ENCODE measurements at regions of chr10 and their contacts with region 1.

Region 1: GRCh38 chr10:931416-932318 is at the start of gene LARP4B:
- DNase-seq: peak; percentile 93 to 99 (median 96)
- ATAC-seq: peak; percentile 98
- H3K4me3 ChIP-seq: peak within 1 kb of the TSS; percentile 42 to 64
- H3K4me3 Mint-ChIP-seq: peak within 1 kb of the TSS; percentile 96
- H3K27ac ChIP-seq: peak within 1 kb of the TSS; percentile 65 to 95
- H3K27ac Mint-ChIP-seq: peak within 1 kb of the TSS; percentile 95
- H3K4me1 ChIP-seq: peaks cover 30% of the 10 kb centered on the region
- H3K4me1 Mint-ChIP-seq: peaks cover 41% of the 10 kb centered on the region
- H3K27me3 ChIP-seq: no peaks in the 10 kb centered on the region
- H3K27me3 Mint-ChIP-seq: no peaks in the 10 kb centered on the region
- CTCF ChIP-seq: no peak
- total RNA-seq, gene LARP4B: 32.5 to 32.7 TPM

Region 2: GRCh38 chr10:1056326-1057105 is 124.8 kb after region 1 on chr10 and contains the start of gene WDR37:
- CTCF ChIA-PET with region 1: no interaction called
- POLR2A ChIA-PET with region 1: interaction called, 3 read pairs
- intact Hi-C with region 1: loop called (anchors 2 kb)
- DNase-seq: peak; percentile 75 to 93 (median 89)
- ATAC-seq: peak; percentile 87
- H3K4me3 ChIP-seq: peak within 1 kb of the TSS; percentile 76 to 87
- H3K4me3 Mint-ChIP-seq: peak within 1 kb of the TSS; percentile 95
- H3K27ac ChIP-seq: peak within 1 kb of the TSS; percentile 92 to 95
- H3K27ac Mint-ChIP-seq: peak within 1 kb of the TSS; percentile 97
- H3K4me1 ChIP-seq: peaks cover 58% of the 10 kb centered on the region
- H3K4me1 Mint-ChIP-seq: peaks cover 83% of the 10 kb centered on the region
- H3K27me3 ChIP-seq: no peaks in the 10 kb centered on the region
- H3K27me3 Mint-ChIP-seq: no peaks in the 10 kb centered on the region
- CTCF ChIP-seq: no peak
- total RNA-seq, gene WDR37: 22.6 to 23.7 TPM

Measured in CD8-positive, alpha-beta T cell (primary cell).